Activated T-helper 1 cell treated with anti-CD3 and anti-CD28 coated beads, Interleukin-12 subunit alpha, Interleukin-12 subunit beta, Interleukin-2, Interleukin-4 antibody, amounts not matched to agents 30 ng/mL and 10 ng/mL and 1 ng/mL, durations not matched to agents 14 hours and 24 hours and 36 hours (primary cell): ENCODE measurements at regions of chr5 and their contacts with region 1.

Region 1: DNA sequence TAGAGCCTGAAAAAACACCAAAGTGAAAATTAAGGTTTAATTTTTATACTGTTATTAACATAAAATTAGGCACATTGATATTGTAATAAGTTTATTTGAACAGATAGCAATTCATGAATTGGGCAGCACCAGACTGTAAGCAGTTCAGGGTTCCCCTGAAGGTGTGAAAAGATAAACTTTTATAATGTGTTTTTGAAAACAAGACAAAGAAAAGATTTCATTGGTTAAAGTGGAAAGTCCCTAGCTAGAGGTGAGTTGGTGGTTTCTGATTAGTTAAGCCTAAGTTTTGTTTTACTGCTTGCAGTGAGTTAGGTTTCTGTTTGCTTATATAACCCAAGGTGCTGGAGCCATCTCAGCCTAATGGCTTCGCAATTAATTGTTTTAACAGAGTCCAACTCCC is 96.5 kb upstream of the RPS23 start:
- DNase-seq: no peak
- H3K4me3 Mint-ChIP-seq: peak overlapping the region; percentile 8
- H3K27ac Mint-ChIP-seq: peak overlapping the region; percentile 72
- H3K4me1 Mint-ChIP-seq: peaks cover 38% of the 10 kb centered on the region
- H3K27me3 Mint-ChIP-seq: no peaks in the 10 kb centered on the region

Region 2: DNA sequence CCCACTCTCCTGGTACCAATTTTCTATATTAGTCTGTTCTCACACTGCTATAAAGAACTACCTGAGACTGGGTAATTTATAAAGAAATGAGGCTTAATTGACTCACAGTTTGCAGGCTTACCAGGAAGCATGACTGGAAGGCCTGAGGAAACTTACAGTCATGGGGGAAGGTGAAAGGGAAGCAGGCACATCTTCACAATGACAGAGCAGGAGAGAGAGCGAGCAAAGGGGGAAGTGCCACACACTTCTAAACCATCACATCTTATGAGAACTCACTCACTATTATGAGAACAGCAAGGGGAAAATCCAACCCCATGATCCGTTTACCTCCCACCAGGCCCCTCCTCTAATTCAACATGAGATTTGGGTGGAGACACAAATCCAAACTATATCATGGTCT is 330.6 kb before region 1 on chr5:
- intact Hi-C with region 1: no loop called
- DNase-seq: no peak
- H3K4me3 Mint-ChIP-seq: no peak overlapping the region
- H3K27ac Mint-ChIP-seq: no peak overlapping the region
- H3K4me1 Mint-ChIP-seq: no peaks in the 10 kb centered on the region
- H3K27me3 Mint-ChIP-seq: no peaks in the 10 kb centered on the region

Region 3: GRCh38 chr5:82388181-82388580 is 13.5 kb after region 1 on chr5:
- intact Hi-C with region 1: loop called (anchors 1 kb)
- DNase-seq: no peak
- H3K4me3 Mint-ChIP-seq: no peak overlapping the region
- H3K27ac Mint-ChIP-seq: peak overlapping the region; percentile 89
- H3K4me1 Mint-ChIP-seq: peaks cover 41% of the 10 kb centered on the region
- H3K27me3 Mint-ChIP-seq: no peaks in the 10 kb centered on the region